Natural killer cell (primary cell): ENCODE measurements at regions of chr17 and their contacts with region 1.

Region 1: DNA sequence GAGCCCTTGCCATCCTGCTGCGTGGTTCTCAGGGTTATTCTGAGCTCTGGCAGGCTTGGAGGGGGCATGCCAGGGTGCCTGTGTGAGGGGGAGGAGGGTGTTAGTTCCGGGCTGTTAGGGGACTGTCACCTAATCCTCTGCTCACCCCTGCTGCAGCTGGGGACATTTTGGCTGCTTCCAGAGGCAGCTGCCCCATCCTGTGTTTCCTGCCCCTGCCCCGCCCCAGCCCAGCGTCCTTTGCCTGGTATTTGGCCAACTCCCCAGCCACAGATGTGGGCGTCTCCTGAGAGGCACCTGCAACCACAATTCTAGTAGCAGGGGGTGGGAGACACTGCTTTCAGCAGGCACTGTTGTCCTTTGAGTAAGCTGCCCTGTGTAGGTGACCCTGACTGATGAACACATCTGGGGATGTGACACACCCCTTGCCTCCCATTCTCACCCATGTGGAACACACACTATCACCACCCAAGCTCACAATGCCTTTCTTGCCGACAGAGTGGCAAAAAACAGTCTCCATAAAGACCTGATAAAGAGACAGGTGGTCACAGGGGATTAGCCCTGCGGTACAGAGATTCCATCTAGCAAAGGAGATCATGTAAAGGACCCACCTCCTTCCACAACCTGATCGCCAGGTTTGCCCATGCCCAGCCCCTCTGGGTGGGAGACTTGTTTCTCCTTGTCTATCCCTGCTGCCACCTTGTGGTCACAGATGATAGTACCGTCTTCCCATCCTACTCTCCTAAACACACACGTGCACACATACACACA is at the start of gene CHRNE:
- DNase-seq: peak; percentile 64 to 92
- ATAC-seq: peak; percentile 57 to 71 (median 57)
- H3K4me3 ChIP-seq: peak within 1 kb of the TSS; percentile 13
- H3K4me3 Mint-ChIP-seq: peak within 1 kb of the TSS; percentile 83
- H3K27ac ChIP-seq: peak within 1 kb of the TSS; percentile 88
- H3K27ac Mint-ChIP-seq: peak within 1 kb of the TSS; percentile 93 to 94
- H3K4me1 ChIP-seq: peaks cover 56% of the 10 kb centered on the region
- H3K4me1 Mint-ChIP-seq: peaks cover 37 to 41% of the 10 kb centered on the region in 2 donors
- H3K27me3 ChIP-seq: peaks cover 10% of the 10 kb centered on the region
- H3K27me3 Mint-ChIP-seq: no peaks in the 10 kb centered on the region
- CTCF ChIP-seq: peak; percentile 80
- total RNA-seq, gene CHRNE: 11.8 to 17.9 (median 11.8) TPM

Region 2: DNA sequence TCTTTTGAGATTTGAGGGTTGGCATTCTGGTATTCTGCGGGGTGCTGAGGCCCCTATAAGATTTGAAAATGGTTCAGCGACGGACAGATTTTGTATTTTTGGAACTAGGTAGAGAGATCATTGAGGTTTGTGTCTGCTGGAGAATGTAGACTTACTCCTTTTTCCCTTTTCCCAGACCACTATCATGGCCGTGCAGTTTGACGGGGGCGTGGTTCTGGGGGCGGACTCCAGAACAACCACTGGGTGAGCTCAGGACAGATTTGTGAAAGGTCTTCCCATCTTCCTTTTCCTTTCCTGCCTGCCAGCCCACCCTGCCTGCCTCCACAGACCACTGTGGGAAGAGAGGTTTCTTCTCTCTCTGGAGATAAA is 106.7 kb before region 1 on chr17:
- intact Hi-C with region 1: loop called (anchors 5 kb)
- DNase-seq: peak in 1 of 2 donors; percentile 24
- ATAC-seq: no peak
- H3K4me3 ChIP-seq: peak overlapping the region; percentile 67
- H3K4me3 Mint-ChIP-seq: peak overlapping the region; percentile 100
- H3K27ac ChIP-seq: peak overlapping the region; percentile 63
- H3K27ac Mint-ChIP-seq: peak overlapping the region; percentile 94 to 96
- H3K4me1 ChIP-seq: peaks cover 17% of the 10 kb centered on the region
- H3K4me1 Mint-ChIP-seq: peaks cover 14% of the 10 kb centered on the region in 2 donors
- H3K27me3 ChIP-seq: no peaks in the 10 kb centered on the region
- H3K27me3 Mint-ChIP-seq: peaks cover 0 to 3% of the 10 kb centered on the region in 2 donors
- CTCF ChIP-seq: no peak

Region 3: DNA sequence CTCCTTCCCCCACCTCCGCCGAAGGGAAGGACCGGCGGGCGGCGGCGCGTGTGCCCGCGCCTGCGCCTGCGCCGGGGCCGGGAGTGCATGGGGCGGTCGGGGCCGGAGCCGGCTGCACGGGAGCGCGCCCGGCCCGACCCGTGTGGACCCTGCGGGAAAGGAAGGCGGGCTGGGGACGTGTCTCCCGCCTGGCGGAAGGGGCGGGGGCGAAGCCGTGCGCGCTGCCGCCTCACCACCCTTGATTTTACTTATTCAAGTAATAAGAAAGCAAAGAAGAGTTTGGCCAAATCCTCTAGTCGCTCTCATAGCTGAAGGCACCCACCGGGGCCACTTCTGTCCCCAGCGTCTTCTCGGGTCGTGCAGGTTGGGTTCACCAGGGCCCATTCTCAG is 45.7 kb after region 1 on chr17:
- intact Hi-C with region 1: loop called (anchors 2 kb)
- DNase-seq: peak; percentile 72 to 87
- ATAC-seq: peak; percentile 30 to 69 (median 58)
- H3K4me3 ChIP-seq: peak overlapping the region; percentile 99
- H3K4me3 Mint-ChIP-seq: peak overlapping the region; percentile 91
- H3K27ac ChIP-seq: peak overlapping the region; percentile 97
- H3K27ac Mint-ChIP-seq: peak overlapping the region; percentile 87 to 93
- H3K4me1 ChIP-seq: peaks cover 45% of the 10 kb centered on the region
- H3K4me1 Mint-ChIP-seq: peaks cover 45 to 52% of the 10 kb centered on the region in 2 donors
- H3K27me3 ChIP-seq: no peaks in the 10 kb centered on the region
- H3K27me3 Mint-ChIP-seq: peaks cover 0 to 2% of the 10 kb centered on the region in 2 donors
- CTCF ChIP-seq: no peak

Region 4: GRCh38 chr17:4966844-4967538 is 63.8 kb after region 1 on chr17:
- intact Hi-C with region 1: loop called (anchors 2 kb)
- DNase-seq: peak; percentile 87 to 98
- ATAC-seq: peak; percentile 78 to 93 (median 86)
- H3K4me3 ChIP-seq: peak overlapping the region; percentile 89
- H3K4me3 Mint-ChIP-seq: no peak overlapping the region
- H3K27ac ChIP-seq: peak overlapping the region; percentile 86
- H3K27ac Mint-ChIP-seq: no peak overlapping the region
- H3K4me1 ChIP-seq: peaks cover 32% of the 10 kb centered on the region
- H3K4me1 Mint-ChIP-seq: peaks cover 4 to 13% of the 10 kb centered on the region in 2 donors
- H3K27me3 ChIP-seq: no peaks in the 10 kb centered on the region
- H3K27me3 Mint-ChIP-seq: no peaks in the 10 kb centered on the region
- CTCF ChIP-seq: no peak

Region 5: GRCh38 chr17:4986951-4987766 is 83.9 kb after region 1 on chr17 and contains the start of gene CAMTA2:
- intact Hi-C with region 1: loop called (anchors 2 kb)
- DNase-seq: peak; percentile 86 to 91
- ATAC-seq: peak; percentile 92 to 94 (median 93)
- H3K4me3 ChIP-seq: peak within 1 kb of the TSS; percentile 88
- H3K4me3 Mint-ChIP-seq: peak within 1 kb of the TSS; percentile 92
- H3K27ac ChIP-seq: peak within 1 kb of the TSS; percentile 88
- H3K27ac Mint-ChIP-seq: peak within 1 kb of the TSS; percentile 91 to 96
- H3K4me1 ChIP-seq: peaks cover 28% of the 10 kb centered on the region
- H3K4me1 Mint-ChIP-seq: peaks cover 36 to 37% of the 10 kb centered on the region in 2 donors
- H3K27me3 ChIP-seq: no peaks in the 10 kb centered on the region
- H3K27me3 Mint-ChIP-seq: no peaks in the 10 kb centered on the region
- CTCF ChIP-seq: peak; percentile 78
- total RNA-seq, gene CAMTA2: 56.2 to 69.5 (median 69.4) TPM